ENCODE measurements at regions of chr2 and their contacts with region 1.

Region 1: GRCh38 chr2:224982910-224983711 is 59.2 kb downstream of the DOCK10 start:
- DNase-seq: no peak
- H3K4me3 ChIP-seq: peak overlapping the region; percentile 47 to 51
- H3K27ac ChIP-seq: peak overlapping the region; percentile 83 to 85
- H3K4me1 ChIP-seq: peaks cover 0 to 34% (median 5%) of the 10 kb centered on the region in 4 donors
- H3K27me3 ChIP-seq: no peaks in the 10 kb centered on the region
- CTCF ChIP-seq: no peak

Region 2: DNA sequence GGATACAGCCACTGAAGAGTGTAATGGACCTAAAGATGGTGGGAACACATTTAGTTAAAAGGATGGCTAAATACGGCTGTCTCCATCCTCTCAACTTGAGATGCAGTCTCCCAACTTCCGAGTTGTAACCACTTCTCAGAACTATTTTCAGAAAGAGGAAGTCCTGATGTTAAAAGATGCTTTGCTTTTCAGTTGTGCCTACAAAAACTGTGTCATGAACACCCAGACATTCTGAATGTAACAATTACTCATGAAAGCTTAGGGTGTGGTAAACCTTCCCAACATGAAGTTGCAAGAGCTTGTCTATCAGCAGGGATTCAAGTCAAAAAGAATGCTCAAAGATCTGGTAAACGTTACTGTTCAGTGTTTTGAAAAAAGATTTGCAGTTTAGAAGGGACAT is 88.8 kb before region 1 on chr2:
- intact Hi-C with region 1: loop called (anchors 10 kb)
- DNase-seq: no peak
- H3K4me3 ChIP-seq: no peak overlapping the region
- H3K27ac ChIP-seq: no peak overlapping the region
- H3K4me1 ChIP-seq: peaks cover 0 to 10% (median 0%) of the 10 kb centered on the region in 4 donors
- H3K27me3 ChIP-seq: no peaks in the 10 kb centered on the region
- CTCF ChIP-seq: no peak

Region 3: GRCh38 chr2:224938651-224939182 is 44.4 kb before region 1 on chr2:
- intact Hi-C with region 1: loop called (anchors 5 kb)
- DNase-seq: no peak
- H3K4me3 ChIP-seq: peak overlapping the region in 1 of 2 donors; percentile 11
- H3K27ac ChIP-seq: peak overlapping the region; percentile 60 to 80
- H3K4me1 ChIP-seq: peaks cover 0 to 97% (median 24%) of the 10 kb centered on the region in 4 donors
- H3K27me3 ChIP-seq: no peaks in the 10 kb centered on the region
- CTCF ChIP-seq: no peak

Measured in tibial artery (tissue), 4 donors.